ENCODE measurements at regions of chr4 and their contacts with region 1.

Region 1: GRCh38 chr4:183074296-183074990 is 24.6 kb upstream of the WWC2 start:
- DNase-seq: no peak
- ATAC-seq: no peak
- H3K4me3 ChIP-seq: no peak overlapping the region
- H3K27ac ChIP-seq: no peak overlapping the region
- H3K4me1 ChIP-seq: no peaks in the 10 kb centered on the region
- H3K27me3 ChIP-seq: no peaks in the 10 kb centered on the region
- CTCF ChIP-seq: no peak
- EP300 ChIP-seq: no peak
- POLR2A ChIP-seq: no peak
- RAD21 ChIP-seq: no peak

Region 2: DNA sequence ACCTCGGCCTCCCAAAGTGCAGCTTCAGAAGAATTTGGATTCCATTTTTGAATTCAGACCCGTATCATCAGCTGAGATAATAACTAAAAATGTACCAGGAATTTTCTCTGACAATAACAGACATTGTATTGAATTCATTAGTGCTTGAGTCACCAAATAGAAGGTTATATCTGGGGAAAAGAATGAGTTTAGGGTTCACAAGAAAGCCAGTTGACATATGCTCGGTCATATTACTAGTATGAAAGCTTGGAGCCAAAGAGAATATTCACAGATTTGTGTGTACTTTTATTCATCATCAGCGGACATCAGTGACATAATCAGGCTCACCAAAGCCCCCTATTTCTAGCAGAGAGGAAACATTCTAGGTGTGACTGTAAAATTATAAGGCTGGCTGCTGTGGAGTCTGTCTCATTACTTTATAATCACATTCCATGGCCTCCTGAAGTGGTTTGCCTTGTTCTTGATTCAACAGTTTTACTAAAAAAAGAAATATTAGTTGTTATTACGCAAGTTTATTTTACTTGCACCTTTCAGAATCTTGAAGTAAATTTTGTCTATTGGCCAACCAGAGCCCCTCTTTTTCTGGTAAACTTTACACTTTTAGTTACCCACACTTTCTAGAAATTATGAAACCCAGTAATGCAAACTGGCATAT is 142.6 kb before region 1 on chr4:
- CTCF ChIA-PET with region 1: no interaction called
- POLR2A ChIA-PET with region 1: no interaction called
- in situ Hi-C with region 1: loop called (anchors 5 kb)
- intact Hi-C with region 1: no loop called
- DNase-seq: no peak
- ATAC-seq: no peak
- H3K4me3 ChIP-seq: no peak overlapping the region
- H3K27ac ChIP-seq: no peak overlapping the region
- H3K4me1 ChIP-seq: no peaks in the 10 kb centered on the region
- H3K27me3 ChIP-seq: peaks cover 0 to 9% of the 10 kb centered on the region in 2 experiments; a peak in 1 of 5 replicates
- CTCF ChIP-seq: no peak
- EP300 ChIP-seq: no peak
- POLR2A ChIP-seq: no peak
- RAD21 ChIP-seq: no peak

Region 3: GRCh38 chr4:183008492-183008891 is 66.0 kb before region 1 on chr4:
- CTCF ChIA-PET with region 1: no interaction called
- POLR2A ChIA-PET with region 1: no interaction called
- in situ Hi-C with region 1: no loop called
- intact Hi-C with region 1: loop called (anchors 5 kb)
- DNase-seq: peak in 2 of 4 experiments; percentile 41 to 68
- ATAC-seq: peak; percentile 91
- H3K4me3 ChIP-seq: no peak overlapping the region
- H3K27ac ChIP-seq: no peak overlapping the region
- H3K4me1 ChIP-seq: peaks cover 0 to 27% of the 10 kb centered on the region in 2 experiments; a peak in 4 of 5 replicates
- H3K27me3 ChIP-seq: peaks cover 0 to 4% of the 10 kb centered on the region in 2 experiments; a peak in 1 of 5 replicates
- CTCF ChIP-seq: peak; percentile 22 to 46 (median 43); a peak in 4 of 6 replicates
- EP300 ChIP-seq: peak; percentile 9; the same call in 1 of the 2 replicates
- POLR2A ChIP-seq: no peak
- RAD21 ChIP-seq: peak in 1 of 2 experiments; percentile 52; a peak in 2 of 4 replicates

Region 4: GRCh38 chr4:183142571-183143550 is 68.4 kb after region 1 on chr4:
- CTCF ChIA-PET with region 1: no interaction called
- POLR2A ChIA-PET with region 1: interaction called, 3 read pairs
- in situ Hi-C with region 1: no loop called
- intact Hi-C with region 1: loop called (anchors 5 kb)
- DNase-seq: no peak
- ATAC-seq: peak; percentile 33; the same call in 2 of the 3 replicates
- H3K4me3 ChIP-seq: no peak overlapping the region
- H3K27ac ChIP-seq: no peak overlapping the region
- H3K4me1 ChIP-seq: peaks cover 0 to 34% of the 10 kb centered on the region in 2 experiments; a peak in 4 of 5 replicates
- H3K27me3 ChIP-seq: no peaks in the 10 kb centered on the region
- CTCF ChIP-seq: no peak
- EP300 ChIP-seq: no peak
- POLR2A ChIP-seq: no peak
- RAD21 ChIP-seq: no peak

Region 5: DNA sequence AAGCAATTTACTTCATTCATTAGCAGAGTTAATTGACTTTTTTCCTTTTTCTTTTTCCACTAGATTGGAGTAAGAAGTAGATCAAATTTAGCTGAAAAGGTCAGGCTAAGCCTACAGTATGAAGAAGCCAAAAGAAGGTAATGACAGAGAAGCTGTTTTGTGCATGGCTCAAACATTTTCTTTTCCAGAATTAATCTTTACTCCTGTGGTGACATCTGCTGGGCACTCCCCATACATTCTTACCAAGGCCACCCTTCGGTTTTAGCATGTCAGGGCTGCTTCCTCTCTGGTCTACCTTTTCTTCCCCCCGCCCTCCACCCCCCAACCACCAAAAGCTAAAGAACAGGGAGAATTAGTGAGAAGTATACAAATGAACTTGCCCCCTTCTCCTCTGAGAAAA is 175.4 kb after region 1 on chr4:
- CTCF ChIA-PET with region 1: interaction called, 29 read pairs
- POLR2A ChIA-PET with region 1: no interaction called
- in situ Hi-C with region 1: loop called (anchors 5 kb)
- intact Hi-C with region 1: no loop called
- DNase-seq: peak in 2 of 4 experiments; percentile 24 to 40
- ATAC-seq: peak; percentile 82
- H3K4me3 ChIP-seq: no peak overlapping the region
- H3K27ac ChIP-seq: no peak overlapping the region
- H3K4me1 ChIP-seq: no peaks in the 10 kb centered on the region; a peak in 1 of 5 replicates
- H3K27me3 ChIP-seq: no peaks in the 10 kb centered on the region
- CTCF ChIP-seq: peak; percentile 38 to 61 (median 43); a peak in 5 of 6 replicates
- EP300 ChIP-seq: no peak
- POLR2A ChIP-seq: no peak
- RAD21 ChIP-seq: peak; percentile 67

Region 6: DNA sequence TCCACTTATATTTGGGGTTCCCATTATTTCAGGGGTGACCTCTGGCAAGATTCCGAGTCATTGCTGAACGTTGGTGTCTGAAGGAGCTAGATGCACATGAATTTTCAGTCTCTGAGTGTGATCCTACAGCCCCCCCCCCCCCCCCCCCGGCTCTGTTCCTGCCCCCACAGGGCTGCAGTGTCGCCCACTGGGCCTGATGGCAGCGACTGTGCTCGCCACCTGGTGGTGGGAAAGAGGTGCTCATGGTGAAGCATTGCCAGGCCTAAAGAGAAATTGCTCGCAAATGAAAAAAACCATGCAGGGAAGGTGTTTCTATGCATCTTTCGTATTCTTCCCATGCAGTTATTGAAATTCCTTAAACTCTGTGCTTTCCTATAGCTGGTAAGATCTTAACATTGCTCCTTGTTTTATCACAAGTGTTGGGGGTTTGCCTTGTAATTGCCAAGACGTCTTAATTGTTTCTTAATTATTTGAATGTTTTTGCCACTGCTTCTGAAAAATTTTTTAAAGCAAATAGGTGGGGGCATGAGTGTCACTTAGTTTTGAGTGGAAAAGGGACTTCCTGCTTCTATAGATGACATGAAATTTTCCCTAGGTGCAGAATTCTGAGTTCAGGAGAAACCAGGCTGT is 182.4 kb after region 1 on chr4:
- CTCF ChIA-PET with region 1: interaction called, 44 read pairs
- POLR2A ChIA-PET with region 1: interaction called, 4 read pairs
- in situ Hi-C with region 1: loop called (anchors 5 kb)
- intact Hi-C with region 1: loop called (anchors 1 kb)
- DNase-seq: peak; percentile 69 to 70 (median 70)
- ATAC-seq: peak; percentile 98
- H3K4me3 ChIP-seq: no peak overlapping the region
- H3K27ac ChIP-seq: no peak overlapping the region
- H3K4me1 ChIP-seq: no peaks in the 10 kb centered on the region; a peak in 1 of 5 replicates
- H3K27me3 ChIP-seq: no peaks in the 10 kb centered on the region
- CTCF ChIP-seq: peak; percentile 61 to 84 (median 78)
- EP300 ChIP-seq: no peak
- POLR2A ChIP-seq: no peak
- RAD21 ChIP-seq: peak; percentile 27 to 61; a peak in 3 of 4 replicates

Region 7: GRCh38 chr4:183407128-183407585 is 332.7 kb after region 1 on chr4:
- CTCF ChIA-PET with region 1: no interaction called
- POLR2A ChIA-PET with region 1: no interaction called
- in situ Hi-C with region 1: loop called (anchors 10 kb)
- intact Hi-C with region 1: loop called (anchors 2 kb)
- DNase-seq: peak; percentile 78 to 88 (median 80)
- ATAC-seq: peak; percentile 98
- H3K4me3 ChIP-seq: peak overlapping the region; percentile 38
- H3K27ac ChIP-seq: no peak overlapping the region; the same call in 2 of the 3 replicates
- H3K4me1 ChIP-seq: peaks cover 7 to 8% of the 10 kb centered on the region in 2 experiments; a peak in 4 of 5 replicates
- H3K27me3 ChIP-seq: no peaks in the 10 kb centered on the region
- CTCF ChIP-seq: peak; percentile 86 to 92 (median 91)
- EP300 ChIP-seq: no peak; the same call in 1 of the 2 replicates
- POLR2A ChIP-seq: no peak
- RAD21 ChIP-seq: peak; percentile 78 to 85

Measured in K562 (cell line).